ENCODE measurements at regions of chr19 and their contacts with region 1.

Region 1: GRCh38 chr19:13748169-13748828 is 16.0 kb upstream of the MRI1 start:
- DNase-seq: peak; percentile 6
- H3K4me3 Mint-ChIP-seq: peak overlapping the region; percentile 96
- H3K27ac Mint-ChIP-seq: peak overlapping the region; percentile 93
- H3K4me1 Mint-ChIP-seq: peaks cover 10% of the 10 kb centered on the region
- H3K27me3 Mint-ChIP-seq: no peaks in the 10 kb centered on the region

Region 2: GRCh38 chr19:13155472-13156359 is 592.6 kb before region 1 on chr19:
- intact Hi-C with region 1: loop called (anchors 5 kb)
- DNase-seq: peak; percentile 84
- H3K4me3 Mint-ChIP-seq: peak overlapping the region; percentile 95
- H3K27ac Mint-ChIP-seq: peak overlapping the region; percentile 100
- H3K4me1 Mint-ChIP-seq: peaks cover 40% of the 10 kb centered on the region
- H3K27me3 Mint-ChIP-seq: peaks cover 2% of the 10 kb centered on the region

Region 3: GRCh38 chr19:13738073-13738472 is 10.2 kb before region 1 on chr19:
- intact Hi-C with region 1: no loop called
- DNase-seq: no peak
- H3K4me3 Mint-ChIP-seq: no peak overlapping the region
- H3K27ac Mint-ChIP-seq: no peak overlapping the region
- H3K4me1 Mint-ChIP-seq: no peaks in the 10 kb centered on the region
- H3K27me3 Mint-ChIP-seq: no peaks in the 10 kb centered on the region

Region 4: DNA sequence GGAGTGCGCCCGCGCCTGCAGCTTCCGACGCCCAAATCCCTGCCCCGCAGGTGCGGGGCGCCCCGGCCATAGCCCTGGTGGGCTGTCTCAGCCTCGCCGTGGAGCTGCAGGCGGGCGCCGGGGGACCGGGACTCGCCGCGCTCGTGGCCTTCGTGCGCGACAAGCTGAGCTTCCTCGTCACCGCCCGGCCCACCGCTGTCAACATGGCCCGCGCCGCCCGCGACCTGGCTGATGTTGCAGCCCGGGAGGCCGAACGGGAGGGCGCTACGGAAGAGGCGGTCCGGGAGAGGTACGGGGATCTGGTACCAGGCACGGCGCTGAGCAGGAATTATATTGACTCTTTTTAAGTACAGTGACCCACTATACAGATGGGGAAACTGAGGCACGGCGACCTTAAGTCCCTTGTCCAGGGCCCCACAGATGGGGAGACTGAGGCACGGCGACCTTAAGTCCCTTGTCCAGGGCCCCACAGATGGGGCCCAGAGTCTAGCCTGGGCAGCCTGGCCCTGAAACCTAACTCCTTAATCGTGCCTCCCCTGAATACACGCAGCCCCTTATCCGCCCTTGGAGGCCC is 16.6 kb after region 1 on chr19:
- intact Hi-C with region 1: loop called (anchors 1 kb)
- DNase-seq: peak; percentile 28
- H3K4me3 Mint-ChIP-seq: peak overlapping the region; percentile 88
- H3K27ac Mint-ChIP-seq: peak overlapping the region; percentile 82
- H3K4me1 Mint-ChIP-seq: peaks cover 13% of the 10 kb centered on the region
- H3K27me3 Mint-ChIP-seq: no peaks in the 10 kb centered on the region

Region 5: DNA sequence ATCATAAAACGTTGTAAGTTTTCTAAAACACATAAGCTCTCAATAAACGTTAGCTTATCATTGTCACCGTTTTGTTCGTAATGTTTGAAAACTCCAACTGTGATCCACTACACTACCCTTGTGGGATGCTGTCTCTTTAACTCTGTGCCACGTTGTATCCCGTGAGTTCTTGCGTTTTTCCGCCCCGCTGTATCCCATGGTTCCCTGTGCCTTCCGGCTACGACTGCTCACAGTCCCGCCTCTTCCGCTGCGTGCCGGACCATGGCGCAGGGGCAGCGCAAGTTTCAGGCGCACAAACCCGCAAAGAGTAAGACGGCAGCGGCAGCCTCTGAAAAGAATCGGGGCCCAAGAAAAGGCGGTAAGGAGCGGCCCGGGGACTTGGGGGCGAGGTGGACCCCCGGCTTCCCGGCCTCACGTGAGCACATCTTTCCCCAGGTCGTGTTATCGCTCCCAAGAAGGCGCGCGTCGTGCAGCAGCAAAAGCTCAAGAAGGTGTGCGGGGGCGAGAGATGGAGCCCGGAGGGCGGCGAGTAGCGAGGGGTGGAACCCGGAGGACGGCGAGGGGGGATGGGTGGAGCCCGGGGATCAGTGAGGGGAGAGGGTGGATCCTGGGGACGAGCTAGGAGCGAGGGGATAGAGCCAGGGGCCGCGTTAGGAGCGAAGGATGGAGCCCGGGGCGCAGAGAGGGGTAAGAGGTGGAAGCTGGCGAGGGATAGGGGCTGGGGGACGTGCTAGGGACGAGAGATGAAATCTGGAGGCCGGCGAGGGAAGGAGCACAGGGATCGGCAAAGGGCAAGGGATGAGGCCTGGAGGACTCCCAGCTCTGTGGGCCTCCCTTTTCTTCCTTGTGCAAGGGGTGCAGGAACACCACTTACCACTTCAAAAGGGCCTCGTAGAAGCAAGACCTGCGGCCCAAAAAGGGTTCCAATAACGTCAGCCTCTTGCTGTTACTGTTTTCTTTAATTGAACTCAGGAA is 26.2 kb after region 1 on chr19 and contains the start of gene C19orf53:
- intact Hi-C with region 1: loop called (anchors 1 kb)
- DNase-seq: peak; percentile 87
- H3K4me3 Mint-ChIP-seq: peak within 1 kb of the TSS; percentile 100
- H3K27ac Mint-ChIP-seq: peak within 1 kb of the TSS; percentile 99
- H3K4me1 Mint-ChIP-seq: peaks cover 25% of the 10 kb centered on the region
- H3K27me3 Mint-ChIP-seq: no peaks in the 10 kb centered on the region
- total RNA-seq, gene C19orf53: 158 and 162 TPM in 2 replicates

Region 6: GRCh38 chr19:13839130-13839937 is 91.0 kb after region 1 on chr19:
- intact Hi-C with region 1: loop called (anchors 5 kb)
- DNase-seq: peak; percentile 79
- H3K4me3 Mint-ChIP-seq: peak overlapping the region; percentile 93
- H3K27ac Mint-ChIP-seq: peak overlapping the region; percentile 99
- H3K4me1 Mint-ChIP-seq: peaks cover 36% of the 10 kb centered on the region
- H3K27me3 Mint-ChIP-seq: no peaks in the 10 kb centered on the region